Ascending aorta (tissue), 2 donors: ENCODE measurements at regions of chr2 and their contacts with region 1.

Region 1: GRCh38 chr2:174012347-174013314 is 47.5 kb upstream of the SP3 start:
- DNase-seq: peak in 1 of 2 donors; percentile 82
- H3K4me3 ChIP-seq: peak overlapping the region; percentile 53 to 66
- H3K27ac ChIP-seq: peak overlapping the region; percentile 94 to 96
- H3K4me1 ChIP-seq: peaks cover 3 to 36% of the 10 kb centered on the region in 2 donors
- H3K27me3 ChIP-seq: no peaks in the 10 kb centered on the region
- CTCF ChIP-seq: no peak

Region 2: DNA sequence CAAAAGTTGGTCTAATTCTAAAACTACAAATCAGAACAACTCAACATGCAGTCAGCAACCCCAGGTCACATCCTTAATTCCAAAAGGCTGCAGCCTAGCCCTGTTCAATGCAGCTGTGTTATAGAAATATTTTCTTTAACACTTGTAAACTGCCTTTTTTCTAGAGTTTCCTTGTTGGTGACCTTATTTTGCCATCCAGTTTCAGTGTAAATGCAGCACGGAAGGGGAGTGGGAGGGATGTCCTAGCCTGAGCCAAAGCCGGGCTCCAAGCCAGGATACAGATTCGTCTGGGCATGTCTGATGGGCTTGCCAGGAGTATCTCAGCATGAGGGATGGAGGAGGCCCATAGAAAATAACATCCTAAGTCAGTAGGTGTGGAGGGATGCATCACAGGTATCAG is 29.7 kb before region 1 on chr2:
- intact Hi-C with region 1: loop called (anchors 2 kb)
- DNase-seq: no peak
- H3K4me3 ChIP-seq: peak overlapping the region in 1 of 2 donors; percentile 22
- H3K27ac ChIP-seq: peak overlapping the region; percentile 79 to 83
- H3K4me1 ChIP-seq: peaks cover 13 to 52% of the 10 kb centered on the region in 2 donors
- H3K27me3 ChIP-seq: no peaks in the 10 kb centered on the region
- CTCF ChIP-seq: no peak

Region 3: DNA sequence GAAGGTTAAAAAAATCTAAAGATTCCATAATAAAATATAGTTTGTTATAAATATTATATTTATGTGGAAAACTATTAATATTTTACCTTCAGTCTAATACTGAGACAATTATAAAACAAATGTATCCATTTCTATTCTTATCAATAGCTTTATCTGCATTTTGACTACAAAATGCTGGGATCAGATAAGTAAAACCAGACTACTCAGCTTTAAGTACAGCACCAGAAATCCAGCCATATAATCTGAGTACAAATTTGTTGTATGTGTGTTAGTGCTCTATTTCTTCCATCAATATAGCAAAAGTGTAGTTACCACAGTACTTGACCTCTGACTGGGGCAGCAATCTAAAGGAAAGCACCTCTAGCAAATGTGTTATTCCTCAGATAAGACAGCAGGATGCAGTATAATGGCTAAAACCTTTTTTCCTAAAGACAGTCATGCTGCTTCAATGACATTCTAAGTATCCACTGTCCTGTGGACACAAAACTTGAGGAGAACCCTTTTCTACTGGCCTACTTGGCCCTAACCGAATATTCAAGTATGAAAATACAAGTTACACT is 167.6 kb after region 1 on chr2:
- intact Hi-C with region 1: no loop called
- DNase-seq: no peak
- H3K4me3 ChIP-seq: no peak overlapping the region
- H3K27ac ChIP-seq: no peak overlapping the region
- H3K4me1 ChIP-seq: no peaks in the 10 kb centered on the region
- H3K27me3 ChIP-seq: no peaks in the 10 kb centered on the region
- CTCF ChIP-seq: no peak